Activated CD4-positive, alpha-beta T cell treated with anti-CD3 and anti-CD28 coated beads, Interleukin-2, amount 10 ng/mL, durations not matched to agents 24 days and 14 days (primary cell): ENCODE measurements at regions of chr2 and their contacts with region 1.

Region 1: GRCh38 chr2:172427256-172427989 is at the start of gene ITGA6:
- DNase-seq: peak; percentile 90
- H3K4me3 Mint-ChIP-seq: peak within 1 kb of the TSS; percentile 79
- H3K27ac Mint-ChIP-seq: no peak within 1 kb of the TSS
- H3K4me1 Mint-ChIP-seq: peaks cover 20% of the 10 kb centered on the region
- H3K27me3 Mint-ChIP-seq: peaks cover 71% of the 10 kb centered on the region
- total RNA-seq, gene ITGA6: 0.68 and 0.85 TPM in 2 replicates

Region 2: GRCh38 chr2:171574149-171574795 is 853.2 kb before region 1 on chr2:
- intact Hi-C with region 1: no loop called
- DNase-seq: peak; percentile 95
- H3K4me3 Mint-ChIP-seq: no peak overlapping the region
- H3K27ac Mint-ChIP-seq: peak overlapping the region; percentile 35
- H3K4me1 Mint-ChIP-seq: peaks cover 4% of the 10 kb centered on the region
- H3K27me3 Mint-ChIP-seq: peaks cover 10% of the 10 kb centered on the region

Region 3: DNA sequence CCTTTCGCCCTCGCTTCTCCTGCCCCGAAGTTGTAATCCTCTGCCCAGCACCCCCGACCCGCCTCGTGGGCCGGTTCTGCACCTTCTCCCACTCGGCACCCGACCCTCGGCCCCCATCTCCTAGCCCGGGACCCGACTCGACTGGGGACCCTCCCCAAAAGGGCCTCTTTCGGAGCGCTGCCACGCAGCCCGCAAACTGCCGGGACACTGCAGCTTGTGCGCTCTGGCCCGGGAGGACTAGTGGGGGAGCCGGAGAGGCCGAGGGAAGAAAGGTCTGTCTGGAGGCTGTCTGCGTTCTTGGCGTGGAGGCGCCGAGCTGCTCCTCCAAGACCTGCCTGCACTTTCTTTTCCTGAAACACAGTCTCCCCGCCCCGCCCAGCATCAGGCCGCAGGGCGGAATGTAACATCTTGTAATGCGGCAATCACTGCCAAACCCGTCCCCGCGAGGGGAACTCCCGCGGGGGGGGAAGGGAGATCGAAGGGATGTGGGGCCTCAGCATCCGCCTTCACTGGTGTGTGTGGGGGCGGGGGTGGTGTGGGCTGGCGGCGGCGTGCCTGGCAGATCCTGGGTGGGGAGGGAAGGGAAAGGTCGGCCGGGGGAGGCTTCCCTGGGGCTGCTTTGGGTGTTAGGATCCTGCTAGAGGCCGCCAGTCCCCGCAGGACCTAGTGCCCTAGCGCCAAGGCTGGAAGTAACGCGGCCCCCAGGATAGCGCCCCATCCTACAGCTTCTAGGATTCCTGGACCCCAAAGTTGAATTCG is 332.1 kb before region 1 on chr2:
- intact Hi-C with region 1: loop called (anchors 5 kb)
- DNase-seq: peak; percentile 89
- H3K4me3 Mint-ChIP-seq: peak overlapping the region; percentile 82
- H3K27ac Mint-ChIP-seq: peak overlapping the region; percentile 37
- H3K4me1 Mint-ChIP-seq: peaks cover 28% of the 10 kb centered on the region
- H3K27me3 Mint-ChIP-seq: peaks cover 76% of the 10 kb centered on the region

Region 4: DNA sequence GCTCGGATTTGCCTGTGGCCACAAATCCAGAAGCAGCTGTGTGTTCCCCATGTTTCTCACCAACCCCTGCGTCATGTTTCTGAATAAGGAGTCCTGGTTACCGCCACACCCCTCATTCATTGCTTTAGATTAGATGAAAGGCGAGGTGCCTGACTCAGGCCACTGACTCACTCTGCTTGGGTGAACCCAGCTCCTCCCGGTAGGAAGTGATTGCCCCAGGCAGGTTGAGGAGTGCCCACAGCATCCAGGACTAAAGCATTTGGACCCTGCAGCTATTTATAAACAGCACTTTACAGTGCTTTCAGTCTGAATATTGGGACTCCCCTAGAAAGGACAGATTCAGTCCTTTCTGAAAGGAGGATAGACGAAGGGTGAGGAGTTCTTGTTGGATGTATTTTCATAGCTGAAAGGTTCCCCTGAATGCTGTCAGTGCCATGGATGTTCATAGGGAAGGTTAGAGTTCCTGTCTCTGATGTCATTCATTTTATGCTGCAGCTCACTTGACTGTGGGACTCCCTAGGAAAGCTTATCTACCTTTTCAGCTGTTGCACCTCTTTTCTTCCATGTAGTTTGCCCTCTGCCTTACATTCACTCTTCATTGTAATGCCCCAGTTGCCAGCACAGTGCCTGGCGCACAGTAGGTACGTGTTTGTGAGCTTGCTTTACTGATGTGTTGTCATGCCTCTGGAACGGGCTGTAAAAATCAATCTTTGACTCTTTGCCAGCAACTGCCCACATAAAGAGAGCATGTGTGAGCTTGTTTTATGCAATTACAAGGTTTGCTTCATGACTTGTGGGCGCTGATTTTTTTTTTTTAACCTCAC is 14.9 kb after region 1 on chr2:
- intact Hi-C with region 1: loop called (anchors 1 kb)
- DNase-seq: peak; percentile 75
- H3K4me3 Mint-ChIP-seq: no peak overlapping the region
- H3K27ac Mint-ChIP-seq: no peak overlapping the region
- H3K4me1 Mint-ChIP-seq: peaks cover 23% of the 10 kb centered on the region
- H3K27me3 Mint-ChIP-seq: peaks cover 15% of the 10 kb centered on the region

Region 5: GRCh38 chr2:172496160-172496608 is 68.8 kb after region 1 on chr2:
- intact Hi-C with region 1: no loop called
- DNase-seq: peak; percentile 74
- H3K4me3 Mint-ChIP-seq: peak overlapping the region; percentile 45
- H3K27ac Mint-ChIP-seq: peak overlapping the region; percentile 79
- H3K4me1 Mint-ChIP-seq: peaks cover 21% of the 10 kb centered on the region
- H3K27me3 Mint-ChIP-seq: no peaks in the 10 kb centered on the region